ENCODE measurements at regions of chr18 and their contacts with region 1.

Region 1: DNA sequence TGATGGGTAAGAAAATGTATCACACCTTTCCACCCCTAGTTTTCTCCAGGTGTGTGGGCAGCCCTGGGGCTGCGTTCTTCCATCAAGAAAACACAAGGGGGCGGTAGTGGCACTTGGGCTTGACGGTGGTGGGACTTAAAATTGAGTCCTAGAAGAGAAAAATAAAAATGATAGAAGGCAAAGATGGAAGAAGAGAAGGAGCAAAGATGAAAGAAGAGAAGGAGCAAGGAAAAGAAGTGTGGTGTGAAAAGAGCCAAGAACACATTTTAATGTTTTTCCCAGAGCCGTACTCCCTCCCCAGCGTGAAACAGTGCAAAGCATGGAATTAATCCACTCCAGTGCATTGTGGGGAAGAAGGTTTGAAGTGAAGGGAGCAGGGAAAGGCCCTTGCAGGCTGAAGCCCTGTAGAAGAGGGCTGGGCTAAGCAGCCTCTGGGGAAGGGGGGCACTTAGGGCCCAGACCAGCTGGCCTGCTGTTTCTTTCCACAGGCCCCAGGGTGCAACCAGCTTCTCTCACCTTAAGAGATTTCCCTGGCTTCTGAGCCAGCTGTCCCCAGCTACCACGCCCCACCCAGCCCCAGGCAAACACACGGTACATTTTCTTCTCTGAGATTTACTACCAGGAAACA is 256.8 kb downstream of the RNF152 start:
- DNase-seq: peak; percentile 40
- H3K4me3 ChIP-seq: peak overlapping the region; percentile 9
- H3K27ac ChIP-seq: peak overlapping the region; percentile 67
- H3K4me1 ChIP-seq: peaks cover 8% of the 10 kb centered on the region
- H3K27me3 ChIP-seq: no peaks in the 10 kb centered on the region
- CTCF ChIP-seq: peak; percentile 92

Region 2: DNA sequence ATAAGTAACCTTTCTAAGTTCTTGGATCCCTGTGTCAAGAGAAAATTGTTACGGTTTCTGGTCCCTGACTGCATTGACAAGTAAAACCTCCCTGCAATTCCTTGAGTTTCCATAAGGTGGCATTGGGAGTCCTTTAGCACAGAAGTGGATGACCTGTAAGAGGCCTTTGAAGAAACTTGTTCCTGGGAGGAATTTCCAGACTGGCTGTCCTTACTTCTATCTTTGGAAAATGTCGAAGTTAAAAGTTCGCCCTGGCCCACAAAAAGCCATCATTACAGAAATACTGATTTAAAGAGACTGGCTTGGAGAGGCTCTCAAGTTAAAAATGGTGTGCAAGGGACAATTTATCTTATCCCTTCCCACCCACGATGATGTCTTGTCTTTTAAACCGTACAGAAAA is 84.4 kb before region 1 on chr18:
- intact Hi-C with region 1: no loop called
- DNase-seq: no peak
- H3K4me3 ChIP-seq: no peak overlapping the region
- H3K27ac ChIP-seq: no peak overlapping the region
- H3K4me1 ChIP-seq: peaks cover 3% of the 10 kb centered on the region
- H3K27me3 ChIP-seq: no peaks in the 10 kb centered on the region
- CTCF ChIP-seq: peak; percentile 94

Region 3: GRCh38 chr18:61569176-61569892 is 66.7 kb before region 1 on chr18:
- intact Hi-C with region 1: no loop called
- DNase-seq: peak; percentile 51
- H3K4me3 ChIP-seq: peak overlapping the region; percentile 5
- H3K27ac ChIP-seq: peak overlapping the region; percentile 88
- H3K4me1 ChIP-seq: peaks cover 16% of the 10 kb centered on the region
- H3K27me3 ChIP-seq: no peaks in the 10 kb centered on the region
- CTCF ChIP-seq: no peak

Region 4: GRCh38 chr18:61893971-61894750 is 258.1 kb after region 1 on chr18:
- intact Hi-C with region 1: loop called (anchors 5 kb)
- DNase-seq: peak; percentile 81
- H3K4me3 ChIP-seq: peak overlapping the region; percentile 88
- H3K27ac ChIP-seq: peak overlapping the region; percentile 92
- H3K4me1 ChIP-seq: peaks cover 59% of the 10 kb centered on the region
- H3K27me3 ChIP-seq: no peaks in the 10 kb centered on the region
- CTCF ChIP-seq: peak; percentile 64

Region 5: DNA sequence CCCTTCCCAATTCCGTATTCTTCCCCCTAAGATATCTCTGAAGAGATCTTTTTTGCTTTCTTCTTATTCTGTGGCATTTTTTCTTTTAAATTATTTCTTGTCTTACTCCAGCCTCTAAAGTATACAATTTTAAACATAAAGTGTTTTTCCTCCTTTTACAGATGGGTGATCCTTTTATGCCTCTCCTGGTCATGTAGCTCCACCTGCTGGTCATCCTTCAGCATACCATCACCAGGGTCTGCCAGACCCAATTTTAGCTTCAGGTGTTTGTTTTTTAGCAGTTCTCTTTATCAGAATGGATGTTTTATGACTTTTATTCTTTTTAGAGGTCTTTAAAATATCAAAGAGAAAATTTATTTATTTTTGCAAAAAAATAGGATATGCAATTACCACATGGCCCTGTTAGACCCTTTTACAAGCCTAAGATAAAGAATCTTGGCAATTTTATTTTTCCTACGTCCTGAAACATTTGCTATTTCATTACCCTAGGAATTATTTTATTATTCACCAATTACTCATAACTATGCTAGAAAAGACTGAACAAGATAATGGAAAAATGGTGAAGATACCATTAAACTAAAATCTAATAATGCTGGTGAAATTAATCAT is 495.4 kb after region 1 on chr18:
- intact Hi-C with region 1: loop called (anchors 10 kb)
- DNase-seq: no peak
- H3K4me3 ChIP-seq: no peak overlapping the region
- H3K27ac ChIP-seq: no peak overlapping the region
- H3K4me1 ChIP-seq: no peaks in the 10 kb centered on the region
- H3K27me3 ChIP-seq: no peaks in the 10 kb centered on the region
- CTCF ChIP-seq: peak; percentile 89

Measured in left ventricle myocardium inferior (tissue), 1 donor.